GM10248 (cell line): ENCODE measurements at regions of chr7 and their contacts with region 1.

Region 1: DNA sequence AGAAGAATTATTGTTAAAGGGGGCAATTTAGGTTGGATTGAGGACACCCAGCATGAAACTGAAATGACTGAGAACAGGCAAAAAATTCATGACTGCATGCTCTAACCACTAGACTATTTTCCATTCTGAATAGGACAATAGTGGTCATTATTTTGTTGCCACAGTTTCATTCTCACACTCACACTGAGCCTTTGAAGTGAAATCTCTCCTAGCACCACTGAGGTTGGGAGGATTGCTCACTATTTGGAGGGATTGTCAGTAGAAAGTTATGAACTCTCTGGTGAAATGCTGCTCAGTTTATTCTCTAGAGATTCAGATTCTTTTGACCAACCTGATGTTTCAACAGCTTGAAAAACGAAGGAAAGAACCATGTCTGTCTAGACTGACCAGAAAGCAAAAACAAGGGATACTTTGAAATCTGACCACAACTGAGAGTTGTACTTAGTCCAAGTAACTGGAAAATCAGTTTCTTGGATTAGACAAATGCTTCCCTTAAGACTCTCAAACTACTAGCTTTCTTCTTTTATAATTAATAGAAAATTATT is 191.2 kb downstream of the DYNC1I1 start:
- DNase-seq: no peak
- CTCF ChIP-seq: no peak

Region 2: DNA sequence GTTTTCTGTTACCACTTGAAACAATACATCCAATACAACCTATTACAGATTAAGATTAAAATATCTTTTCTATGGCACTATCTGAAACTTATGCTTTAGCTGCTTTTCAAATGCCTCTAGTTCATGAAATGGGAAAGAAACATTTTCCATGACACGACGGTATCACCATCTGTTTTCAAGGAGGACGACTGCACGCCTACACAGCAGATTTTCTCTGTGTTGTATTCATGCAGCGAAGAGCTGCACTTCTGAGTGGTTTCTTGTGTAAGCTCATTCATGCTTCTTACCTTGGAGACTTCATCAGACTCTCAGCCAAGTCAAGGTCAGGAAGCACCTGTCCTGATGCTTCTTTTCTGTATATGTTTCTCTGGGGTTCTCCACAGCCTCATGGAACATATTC is 12.0 kb before region 1 on chr7:
- CTCF ChIA-PET with region 1: interaction called, 10 read pairs
- POLR2A ChIA-PET with region 1: no interaction called
- DNase-seq: no peak
- CTCF ChIP-seq: no peak